ENCODE measurements at regions of chr5 and their contacts with region 1.

Region 1: GRCh38 chr5:168987543-168988300 is 313.2 kb downstream of the SLIT3 start:
- DNase-seq: peak; percentile 65
- H3K4me3 Mint-ChIP-seq: no peak overlapping the region
- H3K27ac Mint-ChIP-seq: no peak overlapping the region
- H3K4me1 Mint-ChIP-seq: no peaks in the 10 kb centered on the region
- H3K27me3 Mint-ChIP-seq: peaks cover 16% of the 10 kb centered on the region

Region 2: DNA sequence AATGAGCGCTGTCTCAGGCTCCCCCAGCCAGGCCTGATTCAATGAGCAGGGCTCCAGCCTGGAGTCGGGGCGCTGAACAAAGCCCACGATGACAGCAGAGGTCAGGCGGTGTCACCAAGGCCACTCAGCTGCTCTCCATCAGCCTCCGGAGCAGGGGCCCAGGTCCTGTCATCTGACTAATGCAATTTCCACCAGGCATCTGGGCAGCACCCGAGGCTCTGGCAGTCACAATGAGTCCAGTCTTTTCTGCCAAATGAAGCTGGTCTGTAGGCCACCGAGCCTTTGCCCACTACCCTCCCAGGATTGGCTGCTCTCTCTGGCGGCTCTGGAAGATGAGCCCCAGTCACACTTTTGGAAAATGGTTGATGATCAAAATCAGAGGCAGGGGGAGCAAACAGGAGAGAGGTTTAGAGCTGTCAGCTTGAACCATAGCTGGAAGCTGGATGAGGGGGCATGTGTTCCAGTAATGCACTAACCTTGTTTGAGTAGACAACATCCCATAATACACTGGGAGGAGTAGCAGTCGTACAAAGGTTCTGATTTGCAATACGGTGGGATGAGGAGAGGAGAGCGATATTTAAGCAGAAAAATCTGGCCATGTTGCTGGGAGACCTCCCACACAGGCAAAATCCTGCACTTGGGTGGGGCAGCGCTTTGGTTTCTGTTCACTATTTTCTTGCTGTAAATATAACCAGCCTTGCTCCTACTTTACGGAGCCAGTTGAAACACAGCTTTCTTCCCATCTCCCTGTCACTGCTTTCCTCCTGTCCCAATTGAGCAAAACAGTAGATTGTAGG is 102.2 kb before region 1 on chr5:
- CTCF ChIA-PET with region 1: no interaction called
- DNase-seq: no peak
- H3K4me3 Mint-ChIP-seq: no peak overlapping the region
- H3K27ac Mint-ChIP-seq: no peak overlapping the region
- H3K4me1 Mint-ChIP-seq: no peaks in the 10 kb centered on the region
- H3K27me3 Mint-ChIP-seq: no peaks in the 10 kb centered on the region

Region 3: GRCh38 chr5:168976311-168976970 is 11.3 kb before region 1 on chr5:
- CTCF ChIA-PET with region 1: interaction called, 10 read pairs
- DNase-seq: no peak
- H3K4me3 Mint-ChIP-seq: no peak overlapping the region
- H3K27ac Mint-ChIP-seq: no peak overlapping the region
- H3K4me1 Mint-ChIP-seq: no peaks in the 10 kb centered on the region
- H3K27me3 Mint-ChIP-seq: peaks cover 35% of the 10 kb centered on the region

Region 4: DNA sequence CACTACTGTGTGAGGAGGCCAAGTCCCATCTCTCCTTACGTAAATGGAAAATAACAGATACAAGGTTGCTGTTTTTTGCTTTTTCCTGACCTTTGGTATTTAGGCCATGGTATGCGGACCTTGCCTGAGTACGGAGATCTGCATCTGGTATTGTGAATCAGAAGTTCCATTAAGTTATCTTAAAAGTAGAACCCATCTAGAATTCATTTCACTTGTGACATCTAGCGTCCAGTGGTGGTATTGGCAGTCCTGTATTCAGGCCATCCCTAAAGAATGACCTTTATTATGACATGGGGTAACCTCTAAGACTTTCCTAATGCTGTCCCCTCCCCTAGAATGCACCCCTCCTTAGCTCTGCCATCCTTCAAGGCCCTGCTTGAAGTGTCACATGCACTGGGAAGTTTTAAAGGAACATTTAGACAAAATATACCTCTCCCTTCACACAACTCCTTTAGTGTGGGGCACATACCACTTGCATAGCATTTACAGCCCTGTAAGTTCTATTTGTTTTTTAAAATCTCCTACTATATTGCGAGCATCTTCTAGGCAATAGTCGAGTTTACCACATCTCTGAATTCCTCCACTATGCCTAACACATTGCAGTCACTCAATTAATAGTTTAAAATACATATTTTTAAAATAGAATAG is 594.0 kb after region 1 on chr5:
- CTCF ChIA-PET with region 1: interaction called, 17 read pairs
- DNase-seq: peak; percentile 72
- H3K4me3 Mint-ChIP-seq: peak overlapping the region; percentile 7
- H3K27ac Mint-ChIP-seq: no peak overlapping the region
- H3K4me1 Mint-ChIP-seq: peaks cover 34% of the 10 kb centered on the region
- H3K27me3 Mint-ChIP-seq: peaks cover 15% of the 10 kb centered on the region

Measured in activated naive CD4-positive, alpha-beta T cell treated with anti-CD3 and anti-CD28 coated beads, Interleukin-2, amount 10 ng/mL, durations not matched to agents 7 days and 5 days (primary cell).